A549 (cell line): ENCODE measurements at regions of chr15 and their contacts with region 1.

Region 1: GRCh38 chr15:68875377-68876116 is 54.8 kb upstream of the SPESP1 start:
- DNase-seq: peak; percentile 91 to 92
- ATAC-seq: peak; percentile 87 to 96
- H3K4me3 ChIP-seq: peak overlapping the region; percentile 17; the same call in 2 of the 3 replicates
- H3K27ac ChIP-seq: no peak overlapping the region
- H3K4me1 ChIP-seq: no peaks in the 10 kb centered on the region; the same call in 2 of the 3 replicates
- CTCF ChIP-seq: peak; percentile 99
- EP300 ChIP-seq: no peak
- POLR2A ChIP-seq: no peak
- RAD21 ChIP-seq: peak; percentile 98 to 99

Region 2: GRCh38 chr15:68550481-68551295 is 324.9 kb before region 1 on chr15:
- CTCF ChIA-PET with region 1: interaction called, 48 read pairs
- POLR2A ChIA-PET with region 1: interaction called, 4 read pairs
- DNase-seq: peak; percentile 66 to 71
- ATAC-seq: peak; percentile 41 to 68; a peak in 4 of 6 replicates
- H3K4me3 ChIP-seq: no peak overlapping the region
- H3K27ac ChIP-seq: peak overlapping the region; percentile 51 to 64; a peak in 5 of 6 replicates
- H3K4me1 ChIP-seq: peaks cover 26% of the 10 kb centered on the region
- CTCF ChIP-seq: peak; percentile 97
- EP300 ChIP-seq: no peak
- POLR2A ChIP-seq: no peak
- RAD21 ChIP-seq: peak; percentile 79 to 85

Region 3: DNA sequence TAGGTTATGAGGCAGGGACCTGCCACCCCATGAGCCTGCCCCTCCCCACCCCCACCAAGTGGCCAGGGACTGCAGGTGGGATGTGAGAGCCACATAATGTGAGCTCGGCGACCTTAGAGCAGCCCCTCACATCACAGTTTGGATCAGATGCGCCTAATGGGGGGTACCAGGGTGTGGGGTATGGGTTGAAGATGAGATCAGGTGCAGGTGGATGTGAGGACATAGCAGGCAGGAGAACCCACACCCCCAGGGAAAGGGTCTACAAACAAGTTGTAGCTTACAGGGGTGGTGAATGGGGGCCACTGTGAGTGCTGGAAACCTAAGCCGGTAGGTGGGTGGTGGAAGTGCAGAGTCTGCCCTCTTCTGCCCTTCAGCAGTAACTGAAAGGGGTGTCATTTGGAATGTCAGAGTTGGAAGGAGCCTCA is 202.8 kb before region 1 on chr15:
- CTCF ChIA-PET with region 1: interaction called, 50 read pairs
- POLR2A ChIA-PET with region 1: no interaction called
- DNase-seq: peak in 1 of 2 experiments; percentile 29
- ATAC-seq: peak; percentile 45 to 60; a peak in 3 of 6 replicates
- H3K4me3 ChIP-seq: no peak overlapping the region
- H3K27ac ChIP-seq: no peak overlapping the region
- H3K4me1 ChIP-seq: no peaks in the 10 kb centered on the region
- CTCF ChIP-seq: peak; percentile 28; the same call in 2 of the 3 replicates
- EP300 ChIP-seq: no peak
- POLR2A ChIP-seq: no peak
- RAD21 ChIP-seq: peak; percentile 27 to 53; a peak in 2 of 5 replicates

Region 4: GRCh38 chr15:68739390-68740080 is 136.0 kb before region 1 on chr15:
- CTCF ChIA-PET with region 1: interaction called, 25 read pairs
- POLR2A ChIA-PET with region 1: interaction called, 3 read pairs
- DNase-seq: no peak
- ATAC-seq: peak; percentile 19 to 34; a peak in 2 of 6 replicates
- H3K4me3 ChIP-seq: no peak overlapping the region
- H3K27ac ChIP-seq: no peak overlapping the region
- H3K4me1 ChIP-seq: no peaks in the 10 kb centered on the region
- CTCF ChIP-seq: no peak
- EP300 ChIP-seq: no peak
- POLR2A ChIP-seq: no peak
- RAD21 ChIP-seq: no peak

Region 5: GRCh38 chr15:68789534-68790241 is 85.9 kb before region 1 on chr15:
- CTCF ChIA-PET with region 1: interaction called, 110 read pairs
- POLR2A ChIA-PET with region 1: no interaction called
- DNase-seq: no peak
- ATAC-seq: no peak; a peak in 1 of 6 replicates
- H3K4me3 ChIP-seq: no peak overlapping the region
- H3K27ac ChIP-seq: 0 out of 6 replicates have a peak overlapping the region, but pooled peaks of 1 of the 2 experiments have one; percentile 23
- H3K4me1 ChIP-seq: peaks cover 46% of the 10 kb centered on the region; the same call in 1 of the 3 replicates
- CTCF ChIP-seq: no peak
- EP300 ChIP-seq: no peak
- POLR2A ChIP-seq: no peak
- RAD21 ChIP-seq: no peak

Region 6: DNA sequence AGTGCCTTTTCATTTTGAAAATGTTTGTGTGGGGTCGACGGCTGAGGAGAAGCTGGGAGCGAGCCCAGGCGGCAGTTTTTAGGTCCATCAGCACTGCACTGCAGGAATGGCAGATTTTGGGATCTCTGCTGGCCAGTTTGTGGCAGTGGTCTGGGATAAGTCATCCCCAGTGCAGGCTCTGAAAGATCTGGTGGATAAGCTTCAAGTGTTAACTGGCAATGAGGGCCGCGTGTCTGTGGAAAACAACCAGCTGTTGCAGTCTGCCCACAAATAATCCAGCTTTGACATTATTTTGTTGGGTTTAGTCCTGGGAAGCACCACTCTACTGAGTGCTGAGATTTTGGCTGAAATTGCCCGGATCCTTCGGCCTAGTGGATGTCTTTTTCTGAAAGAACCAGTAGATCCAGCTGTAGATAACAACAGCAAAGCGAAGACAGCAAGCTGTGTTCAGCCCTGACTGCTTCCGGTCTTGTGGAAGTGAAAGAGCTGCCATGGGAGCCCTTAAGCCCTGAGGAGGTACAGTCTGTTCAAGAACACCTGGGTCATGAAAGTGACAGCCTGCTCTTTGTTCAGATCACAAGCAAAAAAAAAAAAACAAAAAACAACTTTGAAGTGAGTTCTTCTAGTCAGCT is 41.7 kb before region 1 on chr15:
- CTCF ChIA-PET with region 1: interaction called, 12 read pairs
- POLR2A ChIA-PET with region 1: no interaction called
- DNase-seq: no peak
- ATAC-seq: no peak
- H3K4me3 ChIP-seq: no peak overlapping the region
- H3K27ac ChIP-seq: no peak overlapping the region
- H3K4me1 ChIP-seq: no peaks in the 10 kb centered on the region
- CTCF ChIP-seq: no peak
- EP300 ChIP-seq: no peak
- POLR2A ChIP-seq: no peak
- RAD21 ChIP-seq: no peak

Region 7: GRCh38 chr15:68924866-68925560 is 49.5 kb after region 1 on chr15:
- CTCF ChIA-PET with region 1: interaction called, 39 read pairs
- POLR2A ChIA-PET with region 1: no interaction called
- DNase-seq: peak; percentile 78 to 90
- ATAC-seq: peak; percentile 96 to 98
- H3K4me3 ChIP-seq: no peak overlapping the region
- H3K27ac ChIP-seq: no peak overlapping the region
- H3K4me1 ChIP-seq: no peaks in the 10 kb centered on the region
- CTCF ChIP-seq: peak; percentile 97
- EP300 ChIP-seq: no peak
- POLR2A ChIP-seq: no peak
- RAD21 ChIP-seq: peak; percentile 96 to 98